ENCODE measurements at regions of chr7 and their contacts with region 1.

Region 1: DNA sequence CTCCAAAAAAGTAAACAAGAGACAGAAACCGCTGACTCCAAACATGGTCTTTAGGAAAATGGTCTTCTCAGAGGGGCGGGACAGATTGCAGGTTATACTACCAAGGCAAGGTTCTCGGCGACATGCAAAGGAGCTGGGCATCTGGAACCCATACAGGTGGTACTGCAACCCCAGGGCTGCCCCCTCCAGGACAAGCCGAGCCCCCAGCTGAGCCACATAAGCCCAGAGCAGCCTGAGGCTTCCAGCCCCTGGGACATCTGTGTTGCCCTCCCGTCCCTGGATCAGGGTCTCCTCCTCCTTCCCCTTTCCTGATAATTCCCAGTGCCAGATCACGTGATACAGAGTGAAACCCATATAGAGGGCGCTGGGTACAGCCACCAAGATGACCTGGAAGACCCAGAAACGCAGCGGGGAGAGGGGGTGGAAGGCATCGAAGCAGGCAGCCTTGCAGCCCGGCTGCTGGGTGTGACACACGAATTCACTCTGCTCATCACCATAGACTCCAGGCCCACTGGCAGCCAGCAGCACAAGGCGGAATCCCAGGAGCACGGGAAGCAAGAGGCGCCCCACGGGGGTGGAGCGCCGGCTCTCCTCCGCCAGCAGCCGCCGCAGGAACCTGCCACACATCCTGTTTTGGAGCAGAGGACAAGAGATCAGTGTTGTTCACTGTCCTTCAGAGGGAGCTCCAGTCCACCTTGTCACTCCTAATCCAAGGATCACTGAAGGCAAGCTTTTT is at the start of gene GJC3:
- DNase-seq: peak in 41 of 42 donors; percentile 13 to 78 (median 45)

Region 2: GRCh38 chr7:99955235-99955634 is 26.1 kb after region 1 on chr7:
- intact Hi-C with region 1: loop called (anchors 2 kb)
- DNase-seq: no peak

Measured in head of caudate nucleus (tissue), 42 donors.